WTC11 (cell line): ENCODE measurements at regions of chr16 and their contacts with region 1.

Region 1: DNA sequence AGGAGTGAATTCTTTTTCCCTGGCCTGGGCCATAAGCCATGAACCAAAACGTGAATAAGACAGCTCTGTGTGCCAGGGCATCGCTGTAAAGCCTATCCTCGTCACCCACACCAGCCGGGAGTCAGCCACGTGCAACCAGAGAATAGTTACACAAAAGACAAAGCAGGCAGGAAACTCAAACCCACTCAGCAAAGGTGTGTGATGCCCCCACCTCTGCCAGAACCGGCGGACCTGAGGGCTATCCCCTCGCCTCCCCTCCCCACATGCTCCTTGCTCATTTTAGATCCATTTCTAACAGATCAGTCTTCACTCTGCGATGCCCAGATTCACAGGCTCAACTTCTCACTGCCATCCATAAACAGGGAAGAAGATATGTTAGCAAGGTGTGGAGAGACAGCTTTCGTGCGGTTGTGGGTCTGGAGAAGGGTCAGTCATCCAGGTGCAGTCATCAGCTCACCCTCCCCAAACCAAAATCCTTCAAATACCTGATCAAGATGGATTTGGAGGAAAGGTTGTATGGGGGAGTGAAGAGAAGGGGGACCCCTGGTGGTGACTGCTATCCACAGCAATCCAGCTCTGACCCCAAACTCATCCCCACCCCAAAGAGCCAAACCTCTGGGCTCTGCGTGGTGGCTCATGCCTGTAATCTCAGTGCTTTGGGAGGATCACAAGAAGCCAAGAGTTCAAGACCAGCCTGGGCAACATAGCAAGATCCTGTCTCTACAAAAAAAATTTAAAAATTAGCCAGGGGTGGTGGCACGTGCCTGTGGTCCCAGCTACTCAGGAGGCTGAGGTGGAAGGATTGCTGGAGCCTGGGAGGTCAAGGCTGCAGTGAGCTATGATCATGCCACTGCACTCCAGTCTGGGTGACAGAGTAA is 219.2 kb downstream of the C16orf78 start:
- DNase-seq: peak; percentile 72
- ATAC-seq: peak; percentile 79
- H3K4me3 Mint-ChIP-seq: no peak overlapping the region
- H3K27ac Mint-ChIP-seq: peak overlapping the region; percentile 57; the same call in 1 of the 2 replicates
- H3K4me1 Mint-ChIP-seq: peaks cover 55% of the 10 kb centered on the region
- H3K27me3 Mint-ChIP-seq: no peaks in the 10 kb centered on the region; the same call in 1 of the 2 replicates
- CTCF ChIP-seq: peak; percentile 76

Region 2: DNA sequence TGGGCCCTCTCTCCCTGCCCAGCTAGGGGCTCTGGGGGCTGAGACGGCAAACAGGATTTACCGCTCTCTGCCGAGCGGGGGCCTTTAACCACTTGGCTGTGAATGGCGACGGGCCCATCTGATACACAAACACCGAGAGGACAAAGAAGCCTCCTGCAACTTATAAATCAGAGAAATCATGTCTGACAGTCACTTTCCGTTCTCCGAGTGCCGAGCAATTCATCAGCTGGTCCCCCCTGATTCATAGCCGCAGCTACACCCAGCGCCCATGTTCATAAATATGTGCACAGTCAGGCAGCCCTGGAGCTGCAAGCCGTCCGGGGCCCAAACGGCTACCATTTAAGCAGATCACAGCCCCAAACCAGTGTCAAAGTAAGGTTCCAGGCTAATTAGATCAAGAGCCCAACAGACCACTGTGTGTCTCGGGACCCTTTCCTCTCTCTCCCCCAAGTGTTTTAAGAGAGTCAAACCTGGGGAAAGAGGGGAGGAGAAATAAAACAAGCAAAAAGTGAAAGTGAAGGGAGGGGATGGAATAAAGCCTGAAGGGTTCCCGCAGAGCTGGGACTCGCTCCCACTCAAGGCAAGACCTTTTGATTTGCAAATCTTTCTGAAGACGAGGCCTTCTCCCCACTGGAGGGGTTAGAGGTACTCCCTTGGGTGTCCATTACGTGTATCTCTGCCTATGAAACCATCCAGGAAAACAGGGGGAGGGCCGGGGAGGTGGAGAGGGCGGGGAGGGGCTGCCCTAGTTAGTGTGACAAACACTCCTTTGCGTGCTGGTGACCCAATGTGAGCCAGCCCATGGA is 64.5 kb before region 1 on chr16:
- CTCF ChIA-PET with region 1: interaction called, 10 read pairs
- POLR2A ChIA-PET with region 1: no interaction called
- DNase-seq: no peak
- ATAC-seq: peak; percentile 33
- H3K4me3 Mint-ChIP-seq: no peak overlapping the region
- H3K27ac Mint-ChIP-seq: peak overlapping the region; percentile 90
- H3K4me1 Mint-ChIP-seq: peaks cover 49% of the 10 kb centered on the region
- H3K27me3 Mint-ChIP-seq: no peaks in the 10 kb centered on the region
- CTCF ChIP-seq: no peak

Region 3: GRCh38 chr16:49545741-49546448 is 46.9 kb before region 1 on chr16:
- CTCF ChIA-PET with region 1: interaction called, 24 read pairs
- POLR2A ChIA-PET with region 1: no interaction called
- DNase-seq: no peak
- ATAC-seq: no peak
- H3K4me3 Mint-ChIP-seq: no peak overlapping the region
- H3K27ac Mint-ChIP-seq: no peak overlapping the region
- H3K4me1 Mint-ChIP-seq: peaks cover 59% of the 10 kb centered on the region
- H3K27me3 Mint-ChIP-seq: no peaks in the 10 kb centered on the region
- CTCF ChIP-seq: no peak

Region 4: DNA sequence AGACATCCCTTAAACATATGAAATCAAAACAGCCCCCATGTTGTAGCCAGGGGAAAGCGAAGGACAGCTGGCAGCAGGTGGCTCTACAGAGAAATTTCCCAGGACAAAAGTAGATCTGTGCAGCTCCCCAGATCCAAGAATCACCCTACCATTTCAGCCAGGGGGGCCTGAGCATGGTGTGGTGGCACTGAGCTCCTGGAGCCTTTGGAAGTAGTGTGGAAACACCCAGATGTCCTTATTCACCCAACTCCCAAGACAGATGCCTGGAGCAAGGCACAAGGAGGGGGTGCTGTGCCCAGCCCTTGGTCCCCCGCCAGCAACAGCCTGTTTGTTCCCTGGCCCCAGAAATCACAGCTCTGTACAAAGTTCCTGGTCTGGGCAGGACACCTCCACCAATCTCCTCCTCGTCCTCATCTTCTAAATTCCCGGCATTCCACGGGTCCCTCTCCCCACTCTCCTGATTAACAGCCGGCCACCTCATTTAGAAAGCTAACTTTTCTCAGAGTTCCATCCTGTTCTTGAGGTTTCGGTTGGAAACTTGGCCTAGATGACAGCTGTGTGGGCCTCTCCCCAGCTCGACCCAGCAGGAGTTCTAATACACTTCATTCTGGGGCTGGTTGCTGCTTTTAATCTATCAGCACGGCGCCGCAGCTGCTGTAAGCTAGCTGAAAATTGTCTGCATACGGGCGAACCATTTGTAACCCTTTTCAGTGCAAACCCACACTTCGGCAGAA is 28.1 kb before region 1 on chr16:
- CTCF ChIA-PET with region 1: interaction called, 11 read pairs
- POLR2A ChIA-PET with region 1: no interaction called
- DNase-seq: no peak
- ATAC-seq: peak; percentile 71
- H3K4me3 Mint-ChIP-seq: no peak overlapping the region
- H3K27ac Mint-ChIP-seq: no peak overlapping the region
- H3K4me1 Mint-ChIP-seq: peaks cover 18% of the 10 kb centered on the region
- H3K27me3 Mint-ChIP-seq: no peaks in the 10 kb centered on the region
- CTCF ChIP-seq: no peak

Region 5: GRCh38 chr16:49580751-49581303 is 12.0 kb before region 1 on chr16:
- CTCF ChIA-PET with region 1: interaction called, 21 read pairs
- POLR2A ChIA-PET with region 1: no interaction called
- DNase-seq: no peak
- ATAC-seq: no peak
- H3K4me3 Mint-ChIP-seq: no peak overlapping the region
- H3K27ac Mint-ChIP-seq: no peak overlapping the region
- H3K4me1 Mint-ChIP-seq: peaks cover 33% of the 10 kb centered on the region
- H3K27me3 Mint-ChIP-seq: no peaks in the 10 kb centered on the region
- CTCF ChIP-seq: no peak

Region 6: GRCh38 chr16:49739381-49739780 is 146.6 kb after region 1 on chr16:
- CTCF ChIA-PET with region 1: interaction called, 10 read pairs
- POLR2A ChIA-PET with region 1: no interaction called
- DNase-seq: peak; percentile 69
- ATAC-seq: peak; percentile 88
- H3K4me3 Mint-ChIP-seq: no peak overlapping the region
- H3K27ac Mint-ChIP-seq: no peak overlapping the region
- H3K4me1 Mint-ChIP-seq: peaks cover 29% of the 10 kb centered on the region
- H3K27me3 Mint-ChIP-seq: no peaks in the 10 kb centered on the region
- CTCF ChIP-seq: no peak